PC-3 (cell line): ENCODE measurements at regions of chr7 and their contacts with region 1.

Region 1: GRCh38 chr7:77759294-77759889 is 38.8 kb downstream of the TMEM60 start:
- DNase-seq: peak; percentile 83
- ATAC-seq: peak; percentile 78
- H3K4me3 ChIP-seq: no peak overlapping the region
- H3K27ac ChIP-seq: no peak overlapping the region
- H3K4me1 ChIP-seq: no peaks in the 10 kb centered on the region
- H3K27me3 ChIP-seq: no peaks in the 10 kb centered on the region
- CTCF ChIP-seq: peak; percentile 89

Region 2: GRCh38 chr7:77368974-77369373 is 390.4 kb before region 1 on chr7:
- CTCF ChIA-PET with region 1: no interaction called
- POLR2A ChIA-PET with region 1: no interaction called
- intact Hi-C with region 1: loop called (anchors 10 kb)
- DNase-seq: peak; percentile 41
- ATAC-seq: peak; percentile 71
- H3K4me3 ChIP-seq: no peak overlapping the region
- H3K27ac ChIP-seq: no peak overlapping the region
- H3K4me1 ChIP-seq: no peaks in the 10 kb centered on the region
- H3K27me3 ChIP-seq: no peaks in the 10 kb centered on the region
- CTCF ChIP-seq: peak; percentile 54

Region 3: DNA sequence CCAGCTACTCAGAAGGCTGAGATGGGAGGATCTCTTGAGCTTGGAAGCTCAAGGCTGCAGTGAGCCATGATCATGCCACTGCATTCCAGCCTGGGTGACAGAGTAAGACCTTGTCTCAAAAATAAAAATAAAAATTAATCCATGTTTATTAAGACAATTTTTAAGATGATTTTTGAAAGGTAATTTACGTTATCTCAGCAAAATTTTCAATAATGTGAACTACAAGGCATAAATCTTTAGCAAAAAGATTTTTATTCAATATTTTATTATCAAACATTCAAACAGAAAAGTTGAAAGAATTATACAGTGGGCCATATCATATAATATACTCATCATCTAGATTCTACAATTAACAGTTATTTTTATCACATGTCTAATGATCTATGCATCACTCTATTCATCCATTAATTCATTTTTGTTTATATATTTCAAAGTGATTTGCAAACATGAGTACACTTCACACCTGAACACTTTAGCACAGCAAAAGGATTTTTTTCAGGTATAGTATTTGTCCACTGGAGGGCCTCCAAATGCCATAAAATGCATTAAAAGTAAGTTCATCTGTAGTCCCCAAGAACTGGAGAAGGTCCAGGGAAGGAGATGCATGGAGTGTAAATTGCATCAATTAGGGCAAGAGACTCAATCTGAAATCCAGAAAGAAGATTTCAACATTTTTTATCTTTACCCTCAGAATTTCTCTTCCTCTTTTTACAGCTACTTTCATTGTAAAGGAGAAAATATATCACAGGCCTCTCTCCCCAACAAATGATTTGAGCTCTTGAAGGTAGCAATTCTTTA is 101.8 kb before region 1 on chr7:
- CTCF ChIA-PET with region 1: interaction called, 3 read pairs
- POLR2A ChIA-PET with region 1: no interaction called
- intact Hi-C with region 1: loop called (anchors 1 kb)
- DNase-seq: peak; percentile 74
- ATAC-seq: peak; percentile 34
- H3K4me3 ChIP-seq: no peak overlapping the region
- H3K27ac ChIP-seq: no peak overlapping the region
- H3K4me1 ChIP-seq: 0 out of 2 replicates have a peak, but pooled peaks cover 5% of the 10 kb centered on the region
- H3K27me3 ChIP-seq: no peaks in the 10 kb centered on the region
- CTCF ChIP-seq: peak; percentile 82

Region 4: GRCh38 chr7:77716804-77717203 is 42.6 kb before region 1 on chr7:
- CTCF ChIA-PET with region 1: no interaction called
- POLR2A ChIA-PET with region 1: no interaction called
- intact Hi-C with region 1: loop called (anchors 5 kb)
- DNase-seq: no peak
- ATAC-seq: no peak
- H3K4me3 ChIP-seq: no peak overlapping the region
- H3K27ac ChIP-seq: no peak overlapping the region
- H3K4me1 ChIP-seq: peaks cover 8% of the 10 kb centered on the region; the same call in 1 of the 2 replicates
- H3K27me3 ChIP-seq: no peaks in the 10 kb centered on the region
- CTCF ChIP-seq: no peak